PC-3 (cell line): ENCODE measurements at regions of chr5 and their contacts with region 1.

Region 1: GRCh38 chr5:114223866-114224265 is 138.0 kb upstream of the KCNN2 start:
- DNase-seq: peak; percentile 58
- ATAC-seq: no peak
- H3K4me3 ChIP-seq: no peak overlapping the region
- H3K27ac ChIP-seq: no peak overlapping the region
- H3K4me1 ChIP-seq: no peaks in the 10 kb centered on the region
- H3K27me3 ChIP-seq: no peaks in the 10 kb centered on the region
- CTCF ChIP-seq: peak; percentile 60

Region 2: GRCh38 chr5:114118511-114118910 is 105.4 kb before region 1 on chr5:
- CTCF ChIA-PET with region 1: no interaction called
- POLR2A ChIA-PET with region 1: no interaction called
- intact Hi-C with region 1: loop called (anchors 10 kb)
- DNase-seq: no peak
- ATAC-seq: no peak
- H3K4me3 ChIP-seq: no peak overlapping the region
- H3K27ac ChIP-seq: no peak overlapping the region
- H3K4me1 ChIP-seq: no peaks in the 10 kb centered on the region
- H3K27me3 ChIP-seq: peaks cover 4% of the 10 kb centered on the region; the same call in 1 of the 2 replicates
- CTCF ChIP-seq: no peak